Caco-2 (cell line): ENCODE measurements at regions of chr15 and their contacts with region 1.

Region 1: GRCh38 chr15:69058830-69059556 is 44.5 kb downstream of the NOX5 start:
- DNase-seq: peak; percentile 85 to 87
- H3K4me3 ChIP-seq: no peak overlapping the region
- H3K4me3 Mint-ChIP-seq: no peak overlapping the region
- H3K27ac Mint-ChIP-seq: no peak overlapping the region
- H3K4me1 ChIP-seq: no peaks in the 10 kb centered on the region
- H3K4me1 Mint-ChIP-seq: no peaks in the 10 kb centered on the region
- H3K27me3 ChIP-seq: peaks cover 2% of the 10 kb centered on the region; the same call in 1 of the 2 replicates
- H3K27me3 Mint-ChIP-seq: peaks cover 10% of the 10 kb centered on the region
- CTCF ChIP-seq: peak; percentile 86 to 89

Region 2: GRCh38 chr15:69160141-69160993 is 101.4 kb after region 1 on chr15 and contains the start of gene GLCE:
- CTCF ChIA-PET with region 1: interaction called, 9 read pairs
- POLR2A ChIA-PET with region 1: no interaction called
- intact Hi-C with region 1: loop called (anchors 1 kb)
- DNase-seq: peak; percentile 95 to 98
- H3K4me3 ChIP-seq: peak within 1 kb of the TSS; percentile 98
- H3K4me3 Mint-ChIP-seq: peak within 1 kb of the TSS; percentile 82
- H3K27ac Mint-ChIP-seq: peak within 1 kb of the TSS; percentile 77
- H3K4me1 ChIP-seq: no peaks in the 10 kb centered on the region
- H3K4me1 Mint-ChIP-seq: peaks cover 18% of the 10 kb centered on the region
- H3K27me3 ChIP-seq: no peaks in the 10 kb centered on the region
- H3K27me3 Mint-ChIP-seq: no peaks in the 10 kb centered on the region
- CTCF ChIP-seq: no peak
- total RNA-seq, gene GLCE: 9.1 and 10.2 TPM in 2 replicates

Region 3: DNA sequence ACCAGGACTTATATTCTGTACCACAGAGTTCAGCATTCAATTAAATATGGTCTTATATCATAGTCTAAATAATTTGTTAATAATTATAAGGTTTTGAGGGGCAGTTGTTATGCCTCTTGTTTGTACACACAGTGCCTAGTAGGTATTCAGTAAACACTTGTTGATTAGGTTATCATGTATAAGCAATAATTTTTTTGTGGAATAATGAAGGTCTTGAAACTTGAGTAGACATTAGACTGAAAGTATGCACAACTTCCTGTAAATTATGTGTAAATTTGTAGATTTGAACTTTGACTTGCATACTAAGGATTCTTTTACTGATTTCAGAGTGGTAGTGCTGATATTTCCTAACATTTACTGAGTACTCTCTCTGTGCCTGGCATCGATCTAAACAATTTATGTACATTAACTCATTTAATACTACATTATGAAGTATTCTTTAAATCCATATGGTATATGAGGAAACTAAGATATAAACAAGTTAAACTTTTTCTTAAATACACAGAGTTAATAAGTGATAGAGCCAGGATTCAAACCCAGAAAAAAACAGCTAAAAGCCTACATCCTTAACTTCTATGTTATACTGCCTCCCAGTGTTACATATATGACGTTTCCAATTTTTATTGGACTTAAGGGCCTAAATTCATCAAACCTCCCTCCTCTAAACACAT is 166.5 kb after region 1 on chr15:
- CTCF ChIA-PET with region 1: interaction called, 12 read pairs
- POLR2A ChIA-PET with region 1: no interaction called
- intact Hi-C with region 1: loop called (anchors 1 kb)
- DNase-seq: no peak
- H3K4me3 ChIP-seq: no peak overlapping the region
- H3K4me3 Mint-ChIP-seq: no peak overlapping the region
- H3K27ac Mint-ChIP-seq: no peak overlapping the region
- H3K4me1 ChIP-seq: peaks cover 16% of the 10 kb centered on the region; the same call in 1 of the 2 replicates
- H3K4me1 Mint-ChIP-seq: no peaks in the 10 kb centered on the region
- H3K27me3 ChIP-seq: no peaks in the 10 kb centered on the region
- H3K27me3 Mint-ChIP-seq: no peaks in the 10 kb centered on the region
- CTCF ChIP-seq: peak; percentile 19 to 27

Region 4: GRCh38 chr15:69265347-69265955 is 206.5 kb after region 1 on chr15:
- CTCF ChIA-PET with region 1: interaction called, 6 read pairs
- POLR2A ChIA-PET with region 1: no interaction called
- intact Hi-C with region 1: loop called (anchors 1 kb)
- DNase-seq: peak in 1 of 2 experiments; percentile 23
- H3K4me3 ChIP-seq: no peak overlapping the region
- H3K4me3 Mint-ChIP-seq: no peak overlapping the region
- H3K27ac Mint-ChIP-seq: no peak overlapping the region
- H3K4me1 ChIP-seq: no peaks in the 10 kb centered on the region
- H3K4me1 Mint-ChIP-seq: no peaks in the 10 kb centered on the region
- H3K27me3 ChIP-seq: no peaks in the 10 kb centered on the region
- H3K27me3 Mint-ChIP-seq: no peaks in the 10 kb centered on the region
- CTCF ChIP-seq: peak; percentile 50 to 53

Region 5: DNA sequence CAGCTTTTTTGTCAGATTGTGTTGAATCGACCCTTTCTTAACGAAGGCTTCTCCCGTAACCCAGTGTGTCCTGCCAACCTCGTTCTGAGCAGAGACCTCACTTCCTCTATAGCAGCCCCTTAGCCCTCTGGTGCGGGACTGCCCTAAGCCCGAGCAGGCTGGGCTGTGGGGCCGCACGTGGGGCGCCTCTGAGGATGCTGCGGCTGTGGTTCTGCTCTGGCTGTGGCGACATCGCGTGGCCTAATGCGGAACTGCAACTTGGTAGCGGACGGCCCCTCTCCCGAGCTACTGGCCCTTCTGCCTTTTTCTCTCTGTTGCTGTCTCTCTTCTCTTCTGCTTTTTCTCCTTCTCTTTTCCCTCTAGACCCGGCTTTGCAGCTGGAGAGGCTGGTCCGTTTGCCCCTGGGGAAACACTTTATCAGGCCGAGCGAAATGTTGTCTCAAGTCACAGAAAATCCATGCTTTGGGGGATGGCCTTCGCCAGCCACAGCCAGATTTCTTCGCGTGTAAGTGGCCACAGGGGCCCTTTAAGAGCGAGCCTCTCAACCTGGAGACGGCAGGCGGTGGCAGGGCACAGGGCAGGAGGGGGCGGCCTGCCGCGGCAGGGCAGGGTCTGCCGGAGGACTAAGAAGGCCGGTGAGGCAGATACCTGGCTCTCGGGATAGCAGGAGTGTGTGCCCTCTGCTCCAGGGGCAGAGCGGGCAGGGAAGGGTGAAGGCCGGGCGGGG is 335.7 kb after region 1 on chr15:
- CTCF ChIA-PET with region 1: interaction called, 5 read pairs
- POLR2A ChIA-PET with region 1: no interaction called
- intact Hi-C with region 1: loop called (anchors 1 kb)
- DNase-seq: peak; percentile 71 to 87
- H3K4me3 ChIP-seq: no peak overlapping the region
- H3K4me3 Mint-ChIP-seq: no peak overlapping the region
- H3K27ac Mint-ChIP-seq: peak overlapping the region; percentile 56
- H3K4me1 ChIP-seq: peaks cover 14% of the 10 kb centered on the region; the same call in 1 of the 2 replicates
- H3K4me1 Mint-ChIP-seq: peaks cover 20% of the 10 kb centered on the region
- H3K27me3 ChIP-seq: no peaks in the 10 kb centered on the region
- H3K27me3 Mint-ChIP-seq: no peaks in the 10 kb centered on the region
- CTCF ChIP-seq: peak; percentile 90 to 94